Aorta (tissue), 5 donors: ENCODE measurements at regions of chr1 and their contacts with region 1.

Region 1: GRCh38 chr1:172322219-172323061 is 98.0 kb upstream of the C1orf105 start:
- DNase-seq: peak; percentile 79 to 85
- ATAC-seq: peak; percentile 90
- H3K4me3 ChIP-seq: peak overlapping the region in 1 of 2 donors; percentile 24
- H3K27ac ChIP-seq: peak overlapping the region; percentile 90 to 99
- H3K4me1 ChIP-seq: peaks cover 3 to 6% of the 10 kb centered on the region in 2 donors
- H3K27me3 ChIP-seq: no peaks in the 10 kb centered on the region

Region 2: DNA sequence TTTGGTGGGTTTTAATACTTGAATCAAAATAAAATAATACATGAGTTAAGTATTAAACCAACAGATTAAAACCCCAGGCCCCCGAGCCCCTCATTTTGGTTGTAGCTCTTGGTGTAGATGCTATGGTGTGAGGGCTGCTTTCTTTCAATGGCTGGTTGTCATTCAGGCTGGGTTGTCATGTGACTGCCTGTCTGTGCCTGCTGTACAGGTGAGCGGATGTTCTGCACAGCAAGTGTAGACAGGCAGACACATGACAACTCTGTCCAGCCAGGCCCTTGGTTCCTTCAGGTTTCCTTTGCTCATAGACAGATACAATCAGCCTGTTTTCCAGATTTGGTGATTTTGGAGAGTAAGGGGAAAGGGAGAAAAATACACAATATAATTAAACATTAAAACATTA is 183.8 kb before region 1 on chr1:
- intact Hi-C with region 1: loop called in 1 of 2 experiments (anchors 2 kb)
- DNase-seq: no peak
- ATAC-seq: no peak
- H3K4me3 ChIP-seq: no peak overlapping the region
- H3K27ac ChIP-seq: peak overlapping the region in 1 of 2 donors; percentile 92
- H3K4me1 ChIP-seq: peaks cover 0 to 1% of the 10 kb centered on the region in 2 donors
- H3K27me3 ChIP-seq: no peaks in the 10 kb centered on the region

Region 3: GRCh38 chr1:172144445-172145061 is 177.9 kb before region 1 on chr1:
- intact Hi-C with region 1: loop called (anchors 2 kb)
- DNase-seq: peak; percentile 89 to 90
- ATAC-seq: peak; percentile 96
- H3K4me3 ChIP-seq: peak overlapping the region; percentile 86 to 89
- H3K27ac ChIP-seq: peak overlapping the region; percentile 97
- H3K4me1 ChIP-seq: no peaks in the 10 kb centered on the region
- H3K27me3 ChIP-seq: no peaks in the 10 kb centered on the region

Region 4: DNA sequence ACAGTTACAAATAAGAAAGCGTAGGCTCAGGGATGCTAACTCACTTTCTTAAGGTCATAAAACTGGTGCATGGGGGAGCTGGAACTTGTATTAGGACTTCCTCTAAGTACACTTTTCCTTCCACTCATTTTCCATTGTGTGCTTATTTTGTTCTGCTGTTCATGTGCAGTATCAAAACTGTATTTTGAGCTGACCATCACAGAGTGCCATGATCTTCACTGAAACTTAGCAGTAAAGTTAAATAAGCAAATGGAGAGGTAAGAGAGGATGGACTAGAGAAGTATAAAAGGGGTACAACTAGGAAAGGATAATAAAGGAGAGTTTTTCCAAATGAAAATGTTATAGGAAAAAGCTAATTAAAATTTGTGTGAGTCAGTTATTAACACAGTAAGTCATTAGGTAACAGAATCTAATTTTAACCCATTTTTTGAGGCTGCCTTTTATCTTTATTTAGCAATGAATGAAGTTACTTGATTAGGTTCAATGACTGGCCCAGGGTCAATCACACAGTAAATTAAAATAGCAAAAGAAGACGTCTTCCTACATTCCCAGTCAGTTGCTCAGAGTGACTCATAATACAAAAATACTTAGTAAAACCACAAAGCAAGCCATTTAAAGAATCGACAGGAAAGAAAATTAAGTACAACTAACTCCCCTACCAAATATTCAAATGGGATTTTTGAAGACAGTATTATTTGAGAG is 67.8 kb before region 1 on chr1:
- intact Hi-C with region 1: loop called (anchors 5 to 10 kb)
- DNase-seq: no peak
- ATAC-seq: no peak
- H3K4me3 ChIP-seq: peak overlapping the region in 1 of 2 donors; percentile 26
- H3K27ac ChIP-seq: peak overlapping the region in 1 of 2 donors; percentile 72
- H3K4me1 ChIP-seq: no peaks in the 10 kb centered on the region
- H3K27me3 ChIP-seq: no peaks in the 10 kb centered on the region

Region 5: DNA sequence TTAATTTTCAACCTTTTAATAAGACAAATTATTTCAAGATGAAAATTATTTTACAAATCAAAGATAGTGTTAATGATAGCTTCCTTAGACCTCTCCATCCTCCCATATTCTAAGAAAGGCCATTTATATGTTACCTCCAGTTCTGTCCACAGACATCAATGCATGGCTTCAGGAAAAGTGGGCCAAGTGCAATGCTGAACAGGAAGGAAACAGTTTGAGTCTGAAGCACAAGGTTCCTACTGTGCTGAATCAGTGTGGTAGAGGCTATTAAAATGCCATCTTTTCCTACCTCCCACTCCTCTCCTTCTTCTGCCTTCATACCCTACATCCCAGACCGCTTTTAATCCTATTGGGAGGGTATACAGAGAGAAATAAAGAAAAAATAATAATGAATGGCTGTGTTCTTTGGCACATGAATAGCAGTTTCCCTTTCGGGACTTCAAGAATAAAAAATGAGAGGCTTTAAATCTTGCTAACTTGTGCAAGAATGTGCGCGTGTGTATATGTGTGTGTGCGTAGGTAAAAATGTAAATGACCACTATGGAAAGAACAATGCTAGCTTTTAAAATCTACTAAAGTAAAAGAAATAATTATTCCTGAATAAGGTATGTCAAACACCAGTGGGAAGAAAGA is 35.4 kb after region 1 on chr1:
- intact Hi-C with region 1: loop called (anchors 1 to 2 kb)
- DNase-seq: no peak
- ATAC-seq: no peak
- H3K4me3 ChIP-seq: peak overlapping the region; percentile 26 to 41
- H3K27ac ChIP-seq: peak overlapping the region; percentile 76 to 88
- H3K4me1 ChIP-seq: peaks cover 0 to 2% of the 10 kb centered on the region in 2 donors
- H3K27me3 ChIP-seq: no peaks in the 10 kb centered on the region

Region 6: GRCh38 chr1:172398970-172399755 is 76.7 kb after region 1 on chr1:
- intact Hi-C with region 1: loop called (anchors 2 to 5 kb)
- DNase-seq: peak in 1 of 2 donors; percentile 70
- ATAC-seq: peak; percentile 91
- H3K4me3 ChIP-seq: peak overlapping the region; percentile 1 to 26
- H3K27ac ChIP-seq: peak overlapping the region; percentile 68
- H3K4me1 ChIP-seq: peaks cover 4 to 9% of the 10 kb centered on the region in 2 donors
- H3K27me3 ChIP-seq: no peaks in the 10 kb centered on the region

Region 7: DNA sequence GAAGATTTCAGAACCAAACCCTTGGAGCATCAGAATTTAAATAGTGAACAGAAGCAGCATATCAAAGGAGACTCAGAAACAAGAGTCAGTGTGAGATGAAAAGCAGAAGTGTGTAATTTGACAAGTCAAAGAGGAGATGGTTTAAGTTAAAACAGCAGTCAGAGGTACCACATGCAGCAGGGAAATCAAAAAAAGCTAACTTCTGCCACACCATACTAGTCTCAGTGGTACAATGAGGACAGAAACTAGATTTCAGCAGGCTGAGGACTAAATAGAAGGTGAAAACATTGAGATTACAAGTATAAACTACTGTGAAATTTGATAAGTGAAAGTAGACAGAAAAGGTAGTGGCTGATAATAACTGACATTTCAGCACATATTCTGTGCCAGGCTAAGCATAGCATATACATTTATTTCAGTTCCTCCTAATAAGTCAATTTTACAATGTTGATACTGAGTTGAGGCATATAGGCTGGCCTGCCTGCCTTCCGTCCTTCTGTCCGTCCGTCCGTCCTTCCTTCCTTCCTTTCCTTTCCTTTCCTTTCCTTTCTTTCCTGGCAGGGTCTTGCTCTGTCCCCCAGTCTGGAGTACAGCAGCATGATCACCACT is 223.1 kb after region 1 on chr1:
- intact Hi-C with region 1: no loop called
- DNase-seq: no peak
- ATAC-seq: no peak
- H3K4me3 ChIP-seq: no peak overlapping the region
- H3K27ac ChIP-seq: no peak overlapping the region
- H3K4me1 ChIP-seq: peaks cover 0 to 3% of the 10 kb centered on the region in 2 donors
- H3K27me3 ChIP-seq: no peaks in the 10 kb centered on the region